MCF 10A (cell line): ENCODE measurements at regions of chr17 and their contacts with region 1.

Region 1: GRCh38 chr17:4908301-4908700 is 5.4 kb upstream of the CHRNE start:
- DNase-seq: peak; percentile 43
- H3K4me3 Mint-ChIP-seq: no peak overlapping the region
- H3K27ac Mint-ChIP-seq: no peak overlapping the region
- H3K4me1 Mint-ChIP-seq: peaks cover 5% of the 10 kb centered on the region
- H3K27me3 Mint-ChIP-seq: no peaks in the 10 kb centered on the region
- CTCF ChIP-seq: no peak

Region 2: DNA sequence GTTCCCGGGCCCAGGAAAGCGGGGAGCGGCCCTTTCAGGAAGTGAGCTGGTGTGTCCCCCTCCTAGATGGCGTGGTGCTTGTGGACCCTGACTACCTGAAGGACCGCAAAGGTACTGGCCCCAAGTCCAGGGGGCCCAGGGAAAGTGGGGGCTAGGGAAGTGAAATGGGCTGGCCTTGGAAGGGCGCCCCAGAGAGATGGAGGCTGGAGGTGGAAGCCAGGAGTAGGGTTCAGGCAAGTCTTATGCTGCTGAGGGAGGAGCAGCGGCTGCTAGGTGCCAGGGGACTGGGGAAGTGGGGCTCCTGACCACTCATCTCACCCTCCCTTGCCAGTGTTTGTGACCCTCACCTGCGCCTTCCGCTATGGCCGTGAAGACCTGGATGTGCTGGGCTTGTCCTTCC is 192.2 kb before region 1 on chr17:
- CTCF ChIA-PET with region 1: no interaction called
- POLR2A ChIA-PET with region 1: no interaction called
- intact Hi-C with region 1: no loop called
- DNase-seq: no peak
- H3K4me3 Mint-ChIP-seq: no peak overlapping the region
- H3K27ac Mint-ChIP-seq: no peak overlapping the region
- H3K4me1 Mint-ChIP-seq: no peaks in the 10 kb centered on the region
- H3K27me3 Mint-ChIP-seq: no peaks in the 10 kb centered on the region
- CTCF ChIP-seq: no peak

Region 3: DNA sequence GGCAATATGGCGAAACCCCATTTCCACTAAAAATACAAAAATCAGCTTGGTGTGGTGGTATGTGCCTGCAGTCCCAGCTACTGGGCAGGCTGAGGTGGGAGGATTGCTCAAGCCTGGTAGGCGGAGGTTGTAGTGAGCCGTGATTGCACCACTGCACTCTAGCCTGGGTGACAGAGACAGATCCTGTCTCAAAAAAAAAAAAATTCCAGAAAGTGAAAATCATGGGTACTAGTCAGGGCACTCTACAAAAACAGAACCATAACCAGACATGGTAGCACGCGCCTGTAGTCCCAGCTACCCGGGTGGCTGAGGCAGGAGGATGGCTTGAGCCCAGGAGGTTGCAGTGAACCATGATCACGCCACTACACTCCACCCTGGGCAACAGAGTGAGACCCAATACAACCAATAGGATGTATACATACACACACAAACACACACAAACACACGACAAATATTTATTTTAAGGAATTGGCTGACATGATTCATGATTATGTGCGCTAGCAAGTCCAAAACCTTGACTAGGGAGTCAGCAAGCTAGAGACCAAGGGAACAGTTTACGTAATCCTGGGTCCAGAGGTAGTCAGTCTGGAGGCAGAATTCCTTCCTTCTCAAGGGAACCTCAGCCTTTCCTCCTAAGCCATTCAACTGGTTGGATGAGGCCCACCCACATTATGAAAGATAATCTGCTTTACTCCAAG is 12.2 kb after region 1 on chr17:
- CTCF ChIA-PET with region 1: interaction called, 29 read pairs
- POLR2A ChIA-PET with region 1: interaction called, 48 read pairs
- intact Hi-C with region 1: no loop called
- DNase-seq: peak; percentile 83
- H3K4me3 Mint-ChIP-seq: peak overlapping the region; percentile 39
- H3K27ac Mint-ChIP-seq: peak overlapping the region; percentile 74
- H3K4me1 Mint-ChIP-seq: peaks cover 16% of the 10 kb centered on the region
- H3K27me3 Mint-ChIP-seq: no peaks in the 10 kb centered on the region
- CTCF ChIP-seq: no peak

Region 4: GRCh38 chr17:4939796-4940624 is 31.7 kb after region 1 on chr17 and contains the starts of genes RNF167 and SLC25A11:
- CTCF ChIA-PET with region 1: interaction called, 24 read pairs
- POLR2A ChIA-PET with region 1: interaction called, 182 read pairs
- intact Hi-C with region 1: loop called (anchors 1 kb)
- DNase-seq: peak; percentile 99
- H3K4me3 Mint-ChIP-seq: peak within 1 kb of the TSS; percentile 91
- H3K27ac Mint-ChIP-seq: peak within 1 kb of the TSS; percentile 98
- H3K4me1 Mint-ChIP-seq: peaks cover 44% of the 10 kb centered on the region
- H3K27me3 Mint-ChIP-seq: no peaks in the 10 kb centered on the region
- CTCF ChIP-seq: no peak
- total RNA-seq, gene RNF167: 100.0 and 109 TPM in 2 replicates
- total RNA-seq, gene SLC25A11: 46.8 and 54.5 TPM in 2 replicates

Region 5: GRCh38 chr17:4986951-4987766 is 78.9 kb after region 1 on chr17 and contains the start of gene CAMTA2:
- CTCF ChIA-PET with region 1: interaction called, 6 read pairs
- POLR2A ChIA-PET with region 1: interaction called, 10 read pairs
- intact Hi-C with region 1: loop called (anchors 1 kb)
- DNase-seq: peak; percentile 67
- H3K4me3 Mint-ChIP-seq: peak within 1 kb of the TSS; percentile 87
- H3K27ac Mint-ChIP-seq: peak within 1 kb of the TSS; percentile 84
- H3K4me1 Mint-ChIP-seq: peaks cover 28% of the 10 kb centered on the region
- H3K27me3 Mint-ChIP-seq: no peaks in the 10 kb centered on the region
- CTCF ChIP-seq: peak; percentile 60
- total RNA-seq, gene CAMTA2: 126 and 154 TPM in 2 replicates

Region 6: DNA sequence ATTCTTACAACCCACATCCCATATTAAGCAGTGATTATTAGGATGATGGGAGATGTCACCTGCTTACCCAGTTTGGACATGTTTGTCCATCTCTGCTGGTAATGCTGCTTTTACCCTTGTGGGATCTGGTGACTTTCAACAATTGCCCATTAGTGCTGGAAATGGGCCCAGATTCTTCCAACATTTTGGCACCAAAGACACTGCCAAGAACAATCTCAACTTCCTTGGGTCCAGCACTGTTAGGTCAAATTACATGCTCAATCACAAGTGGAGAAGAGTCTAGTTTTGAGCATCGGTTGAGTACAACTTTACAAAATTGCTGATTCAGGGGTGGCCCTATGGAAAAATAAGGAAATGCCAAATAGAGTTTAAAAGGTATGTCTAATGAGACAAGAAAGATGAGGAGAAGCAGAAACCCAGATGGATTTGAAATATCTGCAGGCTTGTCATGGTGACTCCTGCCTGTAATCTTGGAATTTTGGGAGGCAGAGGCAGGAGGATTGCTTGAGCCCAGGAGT is 157.0 kb after region 1 on chr17:
- CTCF ChIA-PET with region 1: interaction called, 5 read pairs
- POLR2A ChIA-PET with region 1: interaction called, 8 read pairs
- intact Hi-C with region 1: loop called (anchors 1 kb)
- DNase-seq: peak; percentile 28
- H3K4me3 Mint-ChIP-seq: no peak overlapping the region
- H3K27ac Mint-ChIP-seq: no peak overlapping the region
- H3K4me1 Mint-ChIP-seq: no peaks in the 10 kb centered on the region
- H3K27me3 Mint-ChIP-seq: peaks cover 10% of the 10 kb centered on the region
- CTCF ChIP-seq: no peak